ENCODE measurements at regions of chr13 and their contacts with region 1.

Region 1: DNA sequence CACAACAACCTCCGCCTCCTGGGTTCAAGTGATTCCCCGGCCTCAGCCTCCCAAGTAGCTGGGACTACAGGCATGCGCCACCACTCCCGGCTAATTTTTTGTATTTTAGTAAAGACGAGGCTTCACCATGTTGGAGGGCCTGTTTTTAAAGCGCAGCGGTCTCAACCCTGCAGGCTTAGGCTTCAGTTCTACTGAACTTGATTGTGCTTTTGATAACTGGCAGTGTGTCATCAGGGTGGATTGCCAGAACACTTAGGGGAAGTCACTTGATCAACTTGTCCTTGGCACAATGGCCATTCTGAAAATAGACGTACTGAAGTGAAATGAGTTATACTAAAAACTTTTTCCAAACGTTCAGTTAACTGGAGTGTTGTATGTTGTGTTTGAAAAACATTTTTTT is 472.2 kb downstream of the KLF5 start:
- DNase-seq: no peak
- ATAC-seq: no peak
- H3K4me3 ChIP-seq: no peak overlapping the region
- H3K27ac ChIP-seq: no peak overlapping the region
- H3K4me1 ChIP-seq: no peaks in the 10 kb centered on the region
- H3K27me3 ChIP-seq: no peaks in the 10 kb centered on the region
- CTCF ChIP-seq: no peak
- POLR2A ChIP-seq: no peak
- RAD21 ChIP-seq: no peak

Region 2: GRCh38 chr13:73293902-73294523 is 237.0 kb before region 1 on chr13:
- CTCF ChIA-PET with region 1: no interaction called
- POLR2A ChIA-PET with region 1: no interaction called
- RAD21 ChIA-PET with region 1: no interaction called
- intact Hi-C with region 1: loop called (anchors 5 kb)
- DNase-seq: no peak
- ATAC-seq: no peak
- H3K4me3 ChIP-seq: no peak overlapping the region
- H3K27ac ChIP-seq: no peak overlapping the region
- H3K4me1 ChIP-seq: no peaks in the 10 kb centered on the region
- H3K27me3 ChIP-seq: no peaks in the 10 kb centered on the region
- CTCF ChIP-seq: no peak
- POLR2A ChIP-seq: no peak
- RAD21 ChIP-seq: no peak